OCI-LY7 (cell line): ENCODE measurements at regions of chr2 and their contacts with region 1.

Region 1: GRCh38 chr2:168920504-168921157 is 19.5 kb downstream of the G6PC2 start:
- DNase-seq: peak; percentile 49
- H3K4me3 ChIP-seq: no peak overlapping the region
- H3K27ac ChIP-seq: no peak overlapping the region
- H3K4me1 ChIP-seq: no peaks in the 10 kb centered on the region
- CTCF ChIP-seq: peak; percentile 88

Region 2: GRCh38 chr2:168773719-168774521 is 146.7 kb before region 1 on chr2:
- CTCF ChIA-PET with region 1: no interaction called
- POLR2A ChIA-PET with region 1: no interaction called
- intact Hi-C with region 1: loop called (anchors 1 kb)
- DNase-seq: peak; percentile 49
- H3K4me3 ChIP-seq: no peak overlapping the region
- H3K27ac ChIP-seq: no peak overlapping the region
- H3K4me1 ChIP-seq: no peaks in the 10 kb centered on the region
- CTCF ChIP-seq: peak; percentile 92

Region 3: DNA sequence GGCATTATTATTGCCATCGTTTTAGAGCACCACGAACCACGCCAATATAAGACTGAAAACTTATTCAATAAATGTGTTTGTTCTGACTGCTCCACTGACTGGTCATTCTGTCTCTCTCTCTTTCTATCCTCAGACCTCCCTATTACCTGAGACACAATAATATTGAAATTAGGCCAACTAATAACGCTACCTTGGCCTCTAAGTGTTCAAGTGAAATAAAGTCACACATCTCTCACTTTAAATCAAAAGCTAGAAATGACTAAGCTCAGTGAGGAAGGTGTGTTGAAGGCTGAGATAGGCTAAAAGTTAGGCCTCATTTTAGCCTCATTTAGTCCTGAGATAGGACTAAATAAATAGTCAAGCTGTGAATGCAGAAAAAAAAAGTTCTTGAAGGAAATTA is 19.3 kb after region 1 on chr2:
- CTCF ChIA-PET with region 1: no interaction called
- POLR2A ChIA-PET with region 1: no interaction called
- intact Hi-C with region 1: no loop called
- DNase-seq: no peak
- H3K4me3 ChIP-seq: no peak overlapping the region
- H3K27ac ChIP-seq: no peak overlapping the region
- H3K4me1 ChIP-seq: no peaks in the 10 kb centered on the region
- CTCF ChIP-seq: no peak